Ovary (tissue), 10 donors: ENCODE measurements at regions of chr3 and their contacts with region 1.

Region 1: DNA sequence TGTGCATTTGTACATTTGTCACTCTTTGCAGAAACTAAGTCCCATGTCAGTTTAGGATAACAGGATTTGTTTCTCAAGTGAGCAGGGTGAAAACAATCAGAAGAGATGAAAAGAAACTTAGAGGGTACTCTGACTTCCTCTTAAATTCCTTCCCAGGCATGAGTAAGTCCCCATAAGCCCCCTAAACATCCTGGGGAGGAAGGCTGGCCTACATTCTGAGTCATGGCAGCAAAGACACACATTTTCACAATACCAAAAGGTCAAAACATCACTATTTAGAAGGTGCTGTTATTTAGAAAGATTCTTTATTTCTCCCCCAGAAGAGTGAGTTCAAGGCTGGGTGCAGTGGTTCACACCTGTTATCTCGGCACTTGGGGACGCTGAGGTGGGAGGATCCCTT is 7.6 kb upstream of the FOXP1 start:
- DNase-seq: no peak
- H3K4me3 ChIP-seq: no peak overlapping the region
- H3K27ac ChIP-seq: no peak overlapping the region
- H3K4me1 ChIP-seq: no peaks in the 10 kb centered on the region
- H3K27me3 ChIP-seq: no peaks in the 10 kb centered on the region
- CTCF ChIP-seq: no peak
- EP300 ChIP-seq: no peak
- POLR2A ChIP-seq: no peak

Region 2: GRCh38 chr3:70716832-70717231 is 874.3 kb before region 1 on chr3:
- intact Hi-C with region 1: loop called in 2 of 4 experiments (anchors 5 to 10 kb)
- DNase-seq: peak; percentile 8 to 39 (median 27)
- H3K4me3 ChIP-seq: no peak overlapping the region
- H3K27ac ChIP-seq: no peak overlapping the region
- H3K4me1 ChIP-seq: no peaks in the 10 kb centered on the region
- H3K27me3 ChIP-seq: no peaks in the 10 kb centered on the region
- CTCF ChIP-seq: peak in 2 of 3 donors; percentile 24 to 59
- EP300 ChIP-seq: no peak
- POLR2A ChIP-seq: no peak

Region 3: DNA sequence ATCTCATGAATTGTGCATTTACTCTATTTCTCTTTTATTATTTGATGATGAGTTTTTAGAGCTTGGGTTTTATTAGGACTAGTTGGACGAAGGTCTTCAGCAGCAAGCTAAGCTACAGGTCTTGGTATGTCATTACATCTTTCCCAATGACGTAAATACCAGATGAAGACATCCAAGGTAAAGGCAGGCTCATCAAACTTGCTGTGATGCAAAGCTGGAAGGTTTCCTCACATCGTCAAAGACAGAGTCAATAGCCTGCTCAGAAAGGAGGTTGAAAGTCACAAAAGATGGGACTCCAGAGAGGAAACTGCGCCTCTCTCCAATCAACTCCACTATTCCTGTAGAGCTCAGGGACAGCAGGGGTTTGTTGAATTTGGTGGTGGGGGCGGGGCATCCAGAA is 335.1 kb before region 1 on chr3:
- intact Hi-C with region 1: no loop called
- DNase-seq: no peak
- H3K4me3 ChIP-seq: no peak overlapping the region
- H3K27ac ChIP-seq: no peak overlapping the region
- H3K4me1 ChIP-seq: peaks cover 6% of the 10 kb centered on the region
- H3K27me3 ChIP-seq: no peaks in the 10 kb centered on the region
- CTCF ChIP-seq: no peak
- EP300 ChIP-seq: no peak
- POLR2A ChIP-seq: no peak

Region 4: DNA sequence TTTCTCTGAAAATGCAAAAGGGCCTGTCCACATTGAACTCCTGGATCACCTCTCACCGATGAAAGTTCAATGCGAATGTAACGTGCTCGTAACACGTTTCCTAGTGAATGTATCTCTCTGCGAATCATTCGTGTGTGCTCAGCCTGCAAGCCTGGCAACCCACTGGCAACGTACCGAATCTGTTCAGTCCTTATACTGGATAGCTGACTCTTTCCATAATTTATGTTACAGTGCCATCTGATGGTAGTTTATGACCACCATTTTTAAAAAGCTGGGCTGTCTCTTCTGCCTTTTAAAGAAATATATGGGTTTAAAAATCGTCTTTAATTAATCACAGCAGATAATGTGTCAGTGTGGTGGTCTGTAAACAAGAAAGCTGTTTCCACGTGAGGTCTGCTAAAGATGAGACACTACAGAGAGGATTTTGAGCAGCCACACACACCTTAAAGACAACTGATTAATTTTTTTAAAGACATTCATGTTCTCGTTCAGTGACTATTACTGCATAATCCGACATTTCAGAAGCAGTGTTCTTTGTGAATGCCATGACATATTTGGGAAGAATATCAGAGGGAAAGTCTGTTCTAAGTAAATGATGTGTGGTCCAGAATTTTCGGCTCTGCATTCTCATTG is 61.8 kb after region 1 on chr3:
- intact Hi-C with region 1: no loop called
- DNase-seq: peak in 4 of 5 donors; percentile 15 to 39 (median 32)
- H3K4me3 ChIP-seq: no peak overlapping the region
- H3K27ac ChIP-seq: no peak overlapping the region
- H3K4me1 ChIP-seq: no peaks in the 10 kb centered on the region
- H3K27me3 ChIP-seq: no peaks in the 10 kb centered on the region
- CTCF ChIP-seq: peak in 2 of 3 donors; percentile 42 to 54
- EP300 ChIP-seq: no peak
- POLR2A ChIP-seq: no peak